MCF 10A (cell line): ENCODE measurements at regions of chr19 and their contacts with region 1.

Region 1: GRCh38 chr19:44770550-44771257 is 7.0 kb upstream of the CBLC start:
- DNase-seq: peak; percentile 99
- H3K4me3 Mint-ChIP-seq: peak overlapping the region; percentile 41
- H3K27ac Mint-ChIP-seq: no peak overlapping the region
- H3K4me1 Mint-ChIP-seq: peaks cover 24% of the 10 kb centered on the region
- H3K27me3 Mint-ChIP-seq: no peaks in the 10 kb centered on the region
- CTCF ChIP-seq: peak; percentile 77

Region 2: GRCh38 chr19:44576843-44577565 is 193.7 kb before region 1 on chr19:
- CTCF ChIA-PET with region 1: interaction called, 11 read pairs
- POLR2A ChIA-PET with region 1: no interaction called
- intact Hi-C with region 1: no loop called
- DNase-seq: peak; percentile 78
- H3K4me3 Mint-ChIP-seq: no peak overlapping the region
- H3K27ac Mint-ChIP-seq: no peak overlapping the region
- H3K4me1 Mint-ChIP-seq: no peaks in the 10 kb centered on the region
- H3K27me3 Mint-ChIP-seq: no peaks in the 10 kb centered on the region
- CTCF ChIP-seq: peak; percentile 61

Region 3: GRCh38 chr19:44587963-44588770 is 182.5 kb before region 1 on chr19:
- CTCF ChIA-PET with region 1: interaction called, 4 read pairs
- POLR2A ChIA-PET with region 1: interaction called, 5 read pairs
- intact Hi-C with region 1: loop called (anchors 1 kb)
- DNase-seq: peak; percentile 88
- H3K4me3 Mint-ChIP-seq: peak overlapping the region; percentile 21
- H3K27ac Mint-ChIP-seq: peak overlapping the region; percentile 99
- H3K4me1 Mint-ChIP-seq: peaks cover 25% of the 10 kb centered on the region
- H3K27me3 Mint-ChIP-seq: no peaks in the 10 kb centered on the region
- CTCF ChIP-seq: peak; percentile 52

Region 4: GRCh38 chr19:44689056-44689895 is 81.4 kb before region 1 on chr19:
- CTCF ChIA-PET with region 1: interaction called, 55 read pairs
- POLR2A ChIA-PET with region 1: interaction called, 3 read pairs
- intact Hi-C with region 1: loop called (anchors 1 kb)
- DNase-seq: peak; percentile 61
- H3K4me3 Mint-ChIP-seq: no peak overlapping the region
- H3K27ac Mint-ChIP-seq: no peak overlapping the region
- H3K4me1 Mint-ChIP-seq: peaks cover 25% of the 10 kb centered on the region
- H3K27me3 Mint-ChIP-seq: no peaks in the 10 kb centered on the region
- CTCF ChIP-seq: peak; percentile 94

Region 5: DNA sequence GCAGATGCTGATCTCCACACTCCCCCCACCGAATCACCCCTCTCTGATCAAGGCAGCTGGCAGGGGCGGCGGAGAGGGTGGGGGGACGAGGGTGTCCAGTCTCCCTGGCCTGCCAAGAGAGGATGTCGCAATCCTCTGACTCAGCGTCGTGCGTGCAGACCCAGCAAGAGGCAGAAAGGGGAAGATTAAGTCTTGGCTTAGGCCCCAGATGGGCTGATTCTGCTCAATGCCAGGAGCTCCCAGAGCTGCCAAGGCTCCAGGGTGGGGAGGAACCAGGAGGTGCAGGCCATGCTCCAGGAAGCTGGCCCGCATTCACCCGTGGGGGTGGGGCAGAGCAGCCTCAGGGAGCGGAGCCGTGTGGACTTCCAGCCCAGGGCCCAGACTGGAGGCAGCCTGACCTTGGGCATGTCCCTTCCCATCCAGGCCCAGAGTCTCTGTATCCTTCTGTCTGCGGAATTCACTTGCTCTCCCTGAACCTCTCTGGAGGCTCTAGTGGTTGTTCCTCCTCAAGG is 28.8 kb before region 1 on chr19:
- CTCF ChIA-PET with region 1: interaction called, 20 read pairs
- POLR2A ChIA-PET with region 1: interaction called, 47 read pairs
- intact Hi-C with region 1: loop called (anchors 1 kb)
- DNase-seq: peak; percentile 100
- H3K4me3 Mint-ChIP-seq: peak overlapping the region; percentile 55
- H3K27ac Mint-ChIP-seq: peak overlapping the region; percentile 85
- H3K4me1 Mint-ChIP-seq: peaks cover 43% of the 10 kb centered on the region
- H3K27me3 Mint-ChIP-seq: no peaks in the 10 kb centered on the region
- CTCF ChIP-seq: no peak

Region 6: DNA sequence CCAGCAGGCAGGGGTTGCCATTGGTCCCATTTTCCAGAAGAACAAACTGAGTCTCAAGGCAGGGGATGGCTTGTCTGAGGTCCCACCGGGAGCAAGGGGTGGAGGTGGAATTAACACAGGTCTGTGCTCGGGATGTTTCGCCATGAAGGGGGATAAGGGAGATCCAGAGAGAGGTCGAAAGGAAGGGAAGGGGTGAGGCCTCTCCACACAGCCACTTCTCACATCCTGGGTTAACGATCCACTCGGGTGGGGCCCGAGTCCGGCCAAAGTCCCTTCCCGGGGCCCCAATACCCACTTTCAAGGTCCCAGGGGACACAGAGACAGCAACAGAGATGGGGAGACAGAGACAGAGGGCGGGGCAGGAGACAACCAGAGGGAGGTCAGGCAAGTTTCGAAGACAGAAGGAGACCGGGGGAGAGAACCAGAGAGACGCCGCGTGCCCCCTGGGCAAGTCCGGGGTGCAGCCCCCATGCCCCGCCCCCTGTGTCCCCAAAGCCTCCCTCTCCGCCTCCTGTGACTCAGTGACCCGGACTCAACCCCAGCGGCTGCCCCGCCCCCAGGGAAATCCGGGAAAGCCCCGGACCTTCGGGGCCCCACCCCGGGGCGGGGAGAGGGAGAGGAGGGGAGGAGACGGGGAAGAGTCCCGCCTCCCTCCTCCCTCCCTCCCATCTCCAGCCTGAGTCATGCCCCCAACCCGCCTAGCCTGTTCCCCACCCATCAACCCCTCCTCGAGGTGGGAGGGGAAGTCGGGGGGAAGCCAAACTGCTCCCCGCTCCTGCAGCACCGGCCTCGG is 23.6 kb before region 1 on chr19:
- CTCF ChIA-PET with region 1: interaction called, 20 read pairs
- POLR2A ChIA-PET with region 1: interaction called, 47 read pairs
- intact Hi-C with region 1: loop called (anchors 1 kb)
- DNase-seq: peak; percentile 98
- H3K4me3 Mint-ChIP-seq: peak overlapping the region; percentile 83
- H3K27ac Mint-ChIP-seq: no peak overlapping the region
- H3K4me1 Mint-ChIP-seq: peaks cover 58% of the 10 kb centered on the region
- H3K27me3 Mint-ChIP-seq: no peaks in the 10 kb centered on the region
- CTCF ChIP-seq: no peak

Region 7: DNA sequence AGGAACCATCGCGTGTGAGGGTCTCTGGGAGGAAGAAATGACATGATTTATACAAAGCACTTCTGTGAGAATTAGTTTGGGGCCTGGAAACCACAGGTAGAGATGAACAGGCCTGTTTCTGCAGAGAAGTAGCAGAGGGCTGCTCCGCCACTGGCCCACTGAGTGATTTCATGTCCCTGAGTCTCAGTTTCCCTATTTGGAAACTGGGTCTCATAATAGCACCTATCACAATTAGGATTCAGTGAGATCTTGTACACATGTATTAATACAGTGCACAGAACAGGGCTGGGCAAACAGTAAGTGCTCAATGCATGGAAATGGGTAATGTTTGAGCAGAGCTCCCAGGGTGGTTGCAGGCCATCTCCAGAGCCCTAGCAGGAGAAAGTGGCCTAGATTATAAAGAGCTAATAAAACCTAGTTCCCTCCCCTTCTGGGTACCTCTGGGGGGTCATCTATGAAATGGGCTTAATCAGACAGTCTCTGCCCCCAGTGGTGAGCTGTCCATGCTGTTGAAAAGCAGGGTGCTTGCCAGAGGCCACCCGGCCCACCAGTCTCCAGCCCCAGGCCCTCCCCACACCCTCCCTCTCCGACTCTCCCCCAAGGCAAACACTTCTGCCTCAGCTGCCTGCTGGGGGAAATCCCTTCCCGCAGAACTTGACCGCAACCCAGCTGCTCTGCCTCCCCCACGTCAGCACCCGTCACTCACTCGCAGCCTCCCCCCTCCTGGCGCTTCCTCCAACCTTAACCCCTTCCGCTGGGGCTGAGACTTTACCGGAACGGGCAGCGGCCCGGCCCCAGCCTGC is 17.7 kb before region 1 on chr19:
- CTCF ChIA-PET with region 1: interaction called, 15 read pairs
- POLR2A ChIA-PET with region 1: interaction called, 6 read pairs
- intact Hi-C with region 1: loop called (anchors 2 kb)
- DNase-seq: peak; percentile 98
- H3K4me3 Mint-ChIP-seq: peak overlapping the region; percentile 73
- H3K27ac Mint-ChIP-seq: peak overlapping the region; percentile 9
- H3K4me1 Mint-ChIP-seq: peaks cover 40% of the 10 kb centered on the region
- H3K27me3 Mint-ChIP-seq: no peaks in the 10 kb centered on the region
- CTCF ChIP-seq: no peak